ENCODE measurements at regions of chr19 and their contacts with region 1.

Region 1: DNA sequence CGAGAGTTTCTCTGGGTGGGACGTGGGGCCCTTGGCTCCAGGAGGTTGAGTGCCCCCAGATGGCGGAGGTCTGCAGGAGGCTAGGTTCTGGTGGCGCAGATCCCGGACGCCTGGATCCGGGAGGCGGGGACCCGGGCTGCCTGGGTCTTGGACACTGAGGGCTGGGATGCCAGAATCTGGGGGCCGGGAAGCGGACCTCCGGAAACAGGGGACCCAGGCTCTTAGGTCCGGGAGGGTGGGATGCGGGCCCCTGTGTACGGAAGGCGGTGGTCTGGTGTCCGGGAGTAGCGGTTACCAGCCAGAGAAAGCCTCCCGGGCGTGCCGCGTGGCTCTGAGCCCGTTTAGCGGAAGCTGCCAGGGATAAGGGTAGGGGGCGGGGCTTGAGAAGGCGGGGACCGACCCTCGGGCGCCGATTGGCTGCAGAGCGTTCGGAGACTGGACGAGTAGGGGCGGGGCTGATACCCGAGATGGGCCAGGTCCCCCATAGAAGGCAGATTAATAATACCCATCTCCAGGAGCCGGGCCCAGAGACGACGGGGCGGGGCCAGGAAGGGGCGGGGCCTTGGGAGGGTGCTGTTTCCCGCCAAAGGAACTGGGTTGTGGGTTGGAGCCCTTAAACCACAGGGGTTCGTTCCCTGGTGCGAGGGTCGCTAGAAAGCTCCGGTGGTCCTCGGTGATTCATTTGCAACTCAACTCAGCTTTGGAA is at the start of gene SLC1A5:
- H3K4me3 Mint-ChIP-seq: peak within 1 kb of the TSS; percentile 85
- H3K27ac Mint-ChIP-seq: peak within 1 kb of the TSS; percentile 90
- H3K4me1 Mint-ChIP-seq: peaks cover 41% of the 10 kb centered on the region
- H3K27me3 Mint-ChIP-seq: peaks cover 7% of the 10 kb centered on the region

Region 2: GRCh38 chr19:46825525-46825971 is 37.1 kb after region 1 on chr19:
- intact Hi-C with region 1: loop called (anchors 2 kb)
- H3K4me3 Mint-ChIP-seq: peak overlapping the region; percentile 48
- H3K27ac Mint-ChIP-seq: peak overlapping the region; percentile 88
- H3K4me1 Mint-ChIP-seq: peaks cover 64% of the 10 kb centered on the region
- H3K27me3 Mint-ChIP-seq: no peaks in the 10 kb centered on the region

Region 3: GRCh38 chr19:47130591-47131227 is 342.3 kb after region 1 on chr19 and contains the start of gene SAE1:
- intact Hi-C with region 1: no loop called
- H3K4me3 Mint-ChIP-seq: peak within 1 kb of the TSS; percentile 95
- H3K27ac Mint-ChIP-seq: peak within 1 kb of the TSS; percentile 92
- H3K4me1 Mint-ChIP-seq: peaks cover 43% of the 10 kb centered on the region
- H3K27me3 Mint-ChIP-seq: peaks cover 2% of the 10 kb centered on the region